ENCODE measurements at regions of chr6 and their contacts with region 1.

Region 1: GRCh38 chr6:98845211-98846020 is 11.0 kb downstream of the POU3F2 start:
- DNase-seq: peak; percentile 71 to 76 (median 74)
- ATAC-seq: peak; percentile 93
- H3K4me3 ChIP-seq: no peak overlapping the region
- H3K27ac ChIP-seq: no peak overlapping the region
- H3K4me1 ChIP-seq: peaks cover 0 to 15% of the 10 kb centered on the region in 2 experiments; a peak in 1 of 5 replicates
- H3K27me3 ChIP-seq: peaks cover 0 to 25% of the 10 kb centered on the region in 2 experiments; a peak in 2 of 5 replicates
- CTCF ChIP-seq: peak; percentile 80 to 88 (median 84)
- EP300 ChIP-seq: no peak
- POLR2A ChIP-seq: no peak
- RAD21 ChIP-seq: peak; percentile 69 to 89

Region 2: GRCh38 chr6:97068211-97068610 is 1777.2 kb before region 1 on chr6:
- CTCF ChIA-PET with region 1: interaction called, 4 read pairs
- POLR2A ChIA-PET with region 1: no interaction called
- in situ Hi-C with region 1: no loop called
- intact Hi-C with region 1: loop called (anchors 5 kb)
- DNase-seq: peak; percentile 11 to 43 (median 15)
- ATAC-seq: no peak
- H3K4me3 ChIP-seq: no peak overlapping the region
- H3K27ac ChIP-seq: no peak overlapping the region
- H3K4me1 ChIP-seq: no peaks in the 10 kb centered on the region
- H3K27me3 ChIP-seq: no peaks in the 10 kb centered on the region
- CTCF ChIP-seq: peak in 2 of 3 experiments; percentile 39 to 59; a peak in 3 of 6 replicates
- EP300 ChIP-seq: no peak
- POLR2A ChIP-seq: no peak
- RAD21 ChIP-seq: peak; percentile 70 to 72

Region 3: DNA sequence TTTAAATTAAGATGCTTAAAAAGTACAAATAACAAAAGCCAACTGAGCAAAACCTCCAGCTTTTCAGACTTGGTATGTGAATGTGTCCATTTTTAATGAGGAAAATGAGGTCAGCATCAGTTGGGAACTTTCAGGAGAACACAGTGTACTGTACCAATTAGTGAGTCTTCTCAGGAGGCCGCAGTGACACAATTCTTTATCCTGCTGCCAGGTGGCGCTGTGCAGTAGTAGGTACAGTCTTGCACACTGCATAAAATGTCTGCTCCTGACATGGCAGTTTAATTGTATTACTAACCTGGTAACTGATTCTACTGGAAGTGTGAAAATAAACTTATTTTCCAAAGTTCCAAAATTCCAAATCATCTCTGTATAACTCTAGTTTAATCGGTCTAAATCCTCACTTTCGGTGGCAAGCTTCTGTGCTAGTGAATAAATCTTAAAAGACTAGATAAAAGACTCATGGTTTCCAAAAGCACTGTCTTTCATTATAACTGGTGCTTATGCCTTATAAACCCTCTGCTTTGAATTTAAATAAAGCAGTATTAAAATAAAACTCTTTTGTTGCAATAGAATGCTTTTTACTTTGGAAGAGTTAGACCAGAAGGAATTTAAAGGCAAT is 1347.6 kb before region 1 on chr6:
- CTCF ChIA-PET with region 1: interaction called, 5 read pairs
- POLR2A ChIA-PET with region 1: no interaction called
- in situ Hi-C with region 1: no loop called
- intact Hi-C with region 1: loop called (anchors 2 kb)
- DNase-seq: peak; percentile 8 to 57 (median 28)
- ATAC-seq: peak; percentile 91
- H3K4me3 ChIP-seq: no peak overlapping the region
- H3K27ac ChIP-seq: no peak overlapping the region
- H3K4me1 ChIP-seq: no peaks in the 10 kb centered on the region
- H3K27me3 ChIP-seq: no peaks in the 10 kb centered on the region
- CTCF ChIP-seq: peak; percentile 45 to 62 (median 60)
- EP300 ChIP-seq: no peak
- POLR2A ChIP-seq: no peak
- RAD21 ChIP-seq: peak; percentile 56 to 71

Region 4: GRCh38 chr6:98516206-98516605 is 329.2 kb before region 1 on chr6:
- CTCF ChIA-PET with region 1: no interaction called
- POLR2A ChIA-PET with region 1: no interaction called
- in situ Hi-C with region 1: no loop called
- intact Hi-C with region 1: no loop called
- DNase-seq: peak in 1 of 4 experiments; percentile 11
- ATAC-seq: no peak
- H3K4me3 ChIP-seq: no peak overlapping the region
- H3K27ac ChIP-seq: no peak overlapping the region
- H3K4me1 ChIP-seq: no peaks in the 10 kb centered on the region
- H3K27me3 ChIP-seq: no peaks in the 10 kb centered on the region
- CTCF ChIP-seq: no peak
- EP300 ChIP-seq: no peak
- POLR2A ChIP-seq: no peak
- RAD21 ChIP-seq: no peak

Region 5: DNA sequence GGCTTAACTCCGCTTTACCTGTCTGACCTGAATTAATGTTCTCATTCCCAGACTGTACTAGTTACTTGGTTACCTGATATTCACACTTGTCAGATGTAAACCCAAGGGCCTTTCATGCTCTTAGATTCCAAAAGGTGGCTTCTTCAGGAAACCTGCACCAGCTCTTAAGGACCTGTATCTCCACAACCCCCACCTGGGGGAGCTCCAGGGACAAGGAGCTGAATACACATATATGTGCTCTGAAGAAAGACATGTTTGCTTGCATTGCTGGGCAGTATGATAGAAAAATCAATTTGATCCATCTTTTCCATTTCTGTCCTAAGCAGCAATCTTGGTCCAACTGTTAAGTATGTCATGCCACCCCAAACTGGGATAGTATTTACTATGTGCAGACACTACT is 75.9 kb before region 1 on chr6:
- CTCF ChIA-PET with region 1: interaction called, 5 read pairs
- POLR2A ChIA-PET with region 1: no interaction called
- in situ Hi-C with region 1: no loop called
- intact Hi-C with region 1: loop called (anchors 1 kb)
- DNase-seq: peak; percentile 19 to 57 (median 32)
- ATAC-seq: peak; percentile 86
- H3K4me3 ChIP-seq: no peak overlapping the region
- H3K27ac ChIP-seq: no peak overlapping the region
- H3K4me1 ChIP-seq: no peaks in the 10 kb centered on the region
- H3K27me3 ChIP-seq: no peaks in the 10 kb centered on the region
- CTCF ChIP-seq: peak; percentile 47 to 66 (median 57); a peak in 5 of 6 replicates
- EP300 ChIP-seq: no peak
- POLR2A ChIP-seq: no peak
- RAD21 ChIP-seq: peak; percentile 43 to 78; a peak in 3 of 4 replicates

Region 6: DNA sequence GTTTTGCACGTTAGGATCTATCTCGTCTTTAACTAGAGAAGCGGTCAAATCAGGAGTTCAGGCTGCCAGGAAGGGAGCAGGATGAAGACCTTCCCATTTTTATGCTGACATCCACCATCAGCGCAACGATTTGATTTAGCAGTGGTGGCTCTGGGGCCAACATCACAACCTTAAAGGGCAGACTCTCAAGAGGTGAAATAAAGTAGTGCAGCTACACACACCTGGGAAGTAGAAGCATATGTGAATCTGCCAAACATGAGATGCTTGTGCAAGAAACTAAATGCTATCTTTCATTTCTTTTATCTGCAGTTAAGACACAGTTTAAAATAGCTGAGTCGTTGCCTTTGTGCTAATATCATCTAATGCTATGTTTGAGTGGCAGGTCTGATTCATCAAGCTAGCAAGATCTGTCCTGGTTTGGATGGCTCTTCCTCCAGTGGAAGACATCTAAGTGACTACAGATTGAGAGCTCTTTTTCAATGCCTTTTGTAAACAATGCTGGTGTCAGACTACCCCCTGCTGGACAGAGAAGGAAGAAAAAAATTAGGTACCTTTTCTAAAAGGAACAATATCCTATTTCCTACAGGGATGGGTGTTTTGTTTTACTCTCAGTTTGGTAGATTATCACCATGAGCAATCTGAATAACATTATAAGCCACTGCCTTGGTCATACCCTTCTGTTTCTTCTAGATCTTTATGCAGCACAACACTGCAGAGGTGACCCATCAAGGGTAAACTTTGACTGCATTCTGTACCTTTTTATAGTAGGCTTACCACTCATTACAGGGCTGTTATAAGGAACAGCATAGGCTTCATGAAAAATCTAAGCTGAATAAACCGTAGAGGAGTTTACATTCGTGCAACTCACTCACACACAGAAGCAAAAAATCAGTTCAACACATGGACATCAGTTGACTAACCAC is 274.0 kb after region 1 on chr6:
- CTCF ChIA-PET with region 1: no interaction called
- POLR2A ChIA-PET with region 1: no interaction called
- in situ Hi-C with region 1: no loop called
- intact Hi-C with region 1: loop called (anchors 5 kb)
- DNase-seq: peak; percentile 30 to 53 (median 40)
- ATAC-seq: peak; percentile 59; the same call in 2 of the 3 replicates
- H3K4me3 ChIP-seq: no peak overlapping the region
- H3K27ac ChIP-seq: no peak overlapping the region
- H3K4me1 ChIP-seq: no peaks in the 10 kb centered on the region
- H3K27me3 ChIP-seq: no peaks in the 10 kb centered on the region
- CTCF ChIP-seq: peak; percentile 51 to 75 (median 64); a peak in 5 of 6 replicates
- EP300 ChIP-seq: no peak
- POLR2A ChIP-seq: no peak
- RAD21 ChIP-seq: peak; percentile 78 to 87

Region 7: DNA sequence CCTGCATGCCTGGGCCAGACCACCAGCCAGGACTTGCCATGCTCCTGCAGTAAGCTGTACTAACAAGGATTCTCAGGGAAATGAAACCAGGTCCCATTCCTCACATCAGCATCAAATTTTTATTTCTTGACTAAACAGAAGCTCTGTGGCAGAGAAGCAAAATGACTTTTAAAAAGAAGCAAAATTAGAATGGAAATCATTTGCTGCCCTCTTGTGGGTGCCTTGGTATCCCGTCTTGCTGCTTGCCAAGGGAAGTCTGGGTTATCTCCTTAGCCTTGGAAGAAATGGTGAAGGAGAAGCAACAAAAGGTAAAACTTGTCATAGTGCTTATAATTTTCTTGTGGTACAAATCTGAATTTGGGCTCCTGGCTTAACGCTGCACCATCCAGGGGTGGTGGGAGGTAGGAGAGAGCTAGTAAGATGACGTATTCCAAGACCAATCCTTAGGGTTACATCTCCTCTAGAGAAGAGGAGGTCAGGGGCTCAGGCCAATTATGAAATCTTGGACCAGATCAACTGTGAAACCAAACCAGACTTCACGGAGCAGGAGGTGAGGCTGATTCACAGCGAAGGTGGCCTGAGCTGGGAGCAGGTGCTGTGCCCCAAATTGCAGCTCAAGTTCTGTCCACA is 396.6 kb after region 1 on chr6:
- CTCF ChIA-PET with region 1: no interaction called
- POLR2A ChIA-PET with region 1: no interaction called
- in situ Hi-C with region 1: no loop called
- intact Hi-C with region 1: loop called (anchors 5 kb)
- DNase-seq: peak; percentile 13 to 41 (median 15)
- ATAC-seq: peak; percentile 59; the same call in 2 of the 3 replicates
- H3K4me3 ChIP-seq: no peak overlapping the region
- H3K27ac ChIP-seq: no peak overlapping the region
- H3K4me1 ChIP-seq: no peaks in the 10 kb centered on the region
- H3K27me3 ChIP-seq: no peaks in the 10 kb centered on the region
- CTCF ChIP-seq: peak; percentile 37 to 56 (median 43); a peak in 3 of 6 replicates
- EP300 ChIP-seq: no peak
- POLR2A ChIP-seq: no peak
- RAD21 ChIP-seq: peak in 1 of 2 experiments; percentile 52; a peak in 3 of 4 replicates

Measured in K562 (cell line).